HepG2 (cell line): ENCODE measurements at regions of chr4 and their contacts with region 1.

Region 1: GRCh38 chr4:73573794-73574406 is 46.3 kb downstream of the RASSF6 start:
- DNase-seq: peak; percentile 79
- ATAC-seq: peak; percentile 97
- H3K4me3 ChIP-seq: no peak overlapping the region
- H3K27ac ChIP-seq: no peak overlapping the region
- H3K4me1 ChIP-seq: no peaks in the 10 kb centered on the region
- H3K27me3 ChIP-seq: no peaks in the 10 kb centered on the region
- CTCF ChIP-seq: peak; percentile 92
- EP300 ChIP-seq: no peak
- POLR2A ChIP-seq: no peak
- RAD21 ChIP-seq: peak; percentile 89

Region 2: GRCh38 chr4:72909461-72909860 is 664.4 kb before region 1 on chr4:
- CTCF ChIA-PET with region 1: no interaction called
- POLR2A ChIA-PET with region 1: no interaction called
- in situ Hi-C with region 1: no loop called
- intact Hi-C with region 1: no loop called
- DNase-seq: peak; percentile 10
- ATAC-seq: peak; percentile 74
- H3K4me3 ChIP-seq: no peak overlapping the region
- H3K27ac ChIP-seq: no peak overlapping the region
- H3K4me1 ChIP-seq: no peaks in the 10 kb centered on the region
- H3K27me3 ChIP-seq: no peaks in the 10 kb centered on the region
- CTCF ChIP-seq: peak; percentile 51
- EP300 ChIP-seq: no peak
- POLR2A ChIP-seq: no peak
- RAD21 ChIP-seq: no peak

Region 3: GRCh38 chr4:73446336-73446938 is 127.5 kb before region 1 on chr4:
- CTCF ChIA-PET with region 1: no interaction called
- POLR2A ChIA-PET with region 1: no interaction called
- in situ Hi-C with region 1: loop called (anchors 25 kb)
- intact Hi-C with region 1: no loop called
- DNase-seq: peak; percentile 78
- ATAC-seq: peak; percentile 64
- H3K4me3 ChIP-seq: no peak overlapping the region; a peak in 1 of 6 replicates
- H3K27ac ChIP-seq: peak overlapping the region; percentile 38
- H3K4me1 ChIP-seq: peaks cover 82% of the 10 kb centered on the region
- H3K27me3 ChIP-seq: no peaks in the 10 kb centered on the region
- CTCF ChIP-seq: peak; percentile 75
- EP300 ChIP-seq: no peak
- POLR2A ChIP-seq: peak in 1 of 2 experiments; percentile 39; a peak in 2 of 4 replicates
- RAD21 ChIP-seq: peak; percentile 75

Region 4: GRCh38 chr4:73593631-73594241 is 19.8 kb after region 1 on chr4:
- CTCF ChIA-PET with region 1: interaction called, 7 read pairs
- POLR2A ChIA-PET with region 1: no interaction called
- in situ Hi-C with region 1: no loop called
- intact Hi-C with region 1: loop called (anchors 1 kb)
- DNase-seq: peak; percentile 39
- ATAC-seq: no peak
- H3K4me3 ChIP-seq: no peak overlapping the region
- H3K27ac ChIP-seq: no peak overlapping the region
- H3K4me1 ChIP-seq: peaks cover 41% of the 10 kb centered on the region
- H3K27me3 ChIP-seq: no peaks in the 10 kb centered on the region
- CTCF ChIP-seq: peak; percentile 58
- EP300 ChIP-seq: no peak
- POLR2A ChIP-seq: no peak
- RAD21 ChIP-seq: peak; percentile 45; the same call in 1 of the 2 replicates

Region 5: GRCh38 chr4:73653695-73654106 is 79.8 kb after region 1 on chr4:
- CTCF ChIA-PET with region 1: interaction called, 35 read pairs
- POLR2A ChIA-PET with region 1: no interaction called
- in situ Hi-C with region 1: no loop called
- intact Hi-C with region 1: loop called (anchors 1 kb)
- DNase-seq: peak; percentile 45
- ATAC-seq: peak; percentile 90
- H3K4me3 ChIP-seq: no peak overlapping the region
- H3K27ac ChIP-seq: no peak overlapping the region
- H3K4me1 ChIP-seq: peaks cover 1% of the 10 kb centered on the region; the same call in 1 of the 2 replicates
- H3K27me3 ChIP-seq: no peaks in the 10 kb centered on the region
- CTCF ChIP-seq: peak; percentile 73
- EP300 ChIP-seq: no peak
- POLR2A ChIP-seq: no peak
- RAD21 ChIP-seq: peak; percentile 61

Region 6: DNA sequence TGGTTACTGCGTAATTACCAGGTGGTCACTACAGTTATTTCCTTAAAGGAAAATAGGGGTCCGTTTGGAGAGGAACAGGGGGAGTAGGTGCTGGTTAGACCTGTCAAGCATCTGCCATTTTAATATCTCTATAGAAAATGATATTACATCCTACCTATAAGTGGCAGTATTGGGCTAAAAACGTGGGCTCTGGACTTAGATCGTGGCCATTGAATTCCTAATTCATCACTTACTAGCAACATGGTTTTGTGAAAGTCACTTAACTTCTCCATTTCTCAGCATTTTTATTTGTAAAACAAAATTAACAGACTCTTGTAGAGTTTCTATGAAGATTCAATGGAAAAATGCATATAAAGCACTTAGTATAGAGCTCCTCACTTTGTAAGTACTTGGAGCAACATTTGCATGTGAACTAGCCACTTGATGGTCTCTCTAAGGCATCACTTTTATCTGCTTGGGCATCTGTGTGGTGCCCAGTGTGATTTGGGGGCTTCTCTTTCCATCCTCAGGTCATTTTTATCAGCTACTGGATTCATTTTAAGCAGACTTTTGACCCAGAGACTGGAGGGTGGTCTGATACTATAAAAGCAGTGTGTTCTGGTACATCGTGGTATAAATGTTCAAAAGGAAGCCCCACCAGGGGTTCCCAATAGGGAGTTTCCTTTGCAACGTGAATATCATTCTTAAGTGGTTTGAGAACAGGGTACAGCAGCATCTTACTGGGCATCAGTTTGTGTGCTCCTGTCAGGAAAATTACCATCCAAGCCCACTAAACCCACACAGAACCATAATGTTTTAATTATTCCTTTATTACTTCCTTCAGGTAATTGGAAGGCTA is 89.0 kb after region 1 on chr4:
- CTCF ChIA-PET with region 1: interaction called, 6 read pairs
- POLR2A ChIA-PET with region 1: no interaction called
- in situ Hi-C with region 1: no loop called
- intact Hi-C with region 1: loop called (anchors 1 kb)
- DNase-seq: no peak
- ATAC-seq: peak; percentile 36; the same call in 1 of the 3 replicates
- H3K4me3 ChIP-seq: no peak overlapping the region
- H3K27ac ChIP-seq: no peak overlapping the region
- H3K4me1 ChIP-seq: peaks cover 9% of the 10 kb centered on the region
- H3K27me3 ChIP-seq: no peaks in the 10 kb centered on the region
- CTCF ChIP-seq: no peak; the same call in 1 of the 2 replicates
- EP300 ChIP-seq: no peak
- POLR2A ChIP-seq: no peak
- RAD21 ChIP-seq: no peak

Region 7: DNA sequence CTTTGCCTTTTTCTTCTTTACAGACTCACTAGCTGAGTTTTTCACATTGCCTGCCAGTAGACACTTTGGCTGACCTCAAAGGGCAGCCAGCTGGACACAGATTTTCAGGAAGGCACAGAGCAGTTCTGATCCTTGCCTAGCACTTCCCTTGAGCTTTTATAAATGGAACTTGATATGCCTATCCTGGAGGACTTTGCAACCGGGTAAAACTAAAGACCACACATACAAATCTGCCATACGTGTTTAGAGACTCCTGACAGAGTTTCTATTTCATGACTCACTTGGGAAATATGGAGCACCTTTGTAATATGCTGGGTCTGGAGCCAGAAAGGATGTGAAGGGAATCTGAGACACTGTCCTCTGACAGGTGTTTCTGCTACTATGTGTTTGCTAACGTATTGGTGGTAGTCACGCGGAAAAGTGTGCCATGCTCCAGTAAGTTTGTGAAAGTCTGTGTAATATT is 103.0 kb after region 1 on chr4:
- CTCF ChIA-PET with region 1: no interaction called
- POLR2A ChIA-PET with region 1: no interaction called
- in situ Hi-C with region 1: no loop called
- intact Hi-C with region 1: no loop called
- DNase-seq: no peak
- ATAC-seq: no peak
- H3K4me3 ChIP-seq: no peak overlapping the region
- H3K27ac ChIP-seq: no peak overlapping the region
- H3K4me1 ChIP-seq: no peaks in the 10 kb centered on the region
- H3K27me3 ChIP-seq: peaks cover 0 to 1% of the 10 kb centered on the region in 2 experiments; a peak in 3 of 5 replicates
- CTCF ChIP-seq: no peak
- EP300 ChIP-seq: no peak
- POLR2A ChIP-seq: no peak
- RAD21 ChIP-seq: no peak